Mucosa of descending colon (tissue), 3 donors: ENCODE measurements at regions of chr12 and their contacts with region 1.

Region 1: GRCh38 chr12:32906407-32907165 is 10.0 kb upstream of the PKP2 start:
- DNase-seq: peak in 2 of 3 donors; percentile 52 to 89
- ATAC-seq: peak; percentile 90
- H3K4me3 ChIP-seq: no peak overlapping the region
- H3K4me1 ChIP-seq: peaks cover 28% of the 10 kb centered on the region
- CTCF ChIP-seq: no peak

Region 2: GRCh38 chr12:32770141-32770540 is 136.4 kb before region 1 on chr12:
- intact Hi-C with region 1: loop called in 1 of 2 experiments (anchors 5 kb)
- DNase-seq: no peak
- ATAC-seq: no peak
- H3K4me3 ChIP-seq: no peak overlapping the region
- H3K4me1 ChIP-seq: peaks cover 29% of the 10 kb centered on the region
- CTCF ChIP-seq: no peak